CD8-positive, alpha-beta T cell (primary cell): ENCODE measurements at regions of chrX and their contacts with region 1.

Region 1: DNA sequence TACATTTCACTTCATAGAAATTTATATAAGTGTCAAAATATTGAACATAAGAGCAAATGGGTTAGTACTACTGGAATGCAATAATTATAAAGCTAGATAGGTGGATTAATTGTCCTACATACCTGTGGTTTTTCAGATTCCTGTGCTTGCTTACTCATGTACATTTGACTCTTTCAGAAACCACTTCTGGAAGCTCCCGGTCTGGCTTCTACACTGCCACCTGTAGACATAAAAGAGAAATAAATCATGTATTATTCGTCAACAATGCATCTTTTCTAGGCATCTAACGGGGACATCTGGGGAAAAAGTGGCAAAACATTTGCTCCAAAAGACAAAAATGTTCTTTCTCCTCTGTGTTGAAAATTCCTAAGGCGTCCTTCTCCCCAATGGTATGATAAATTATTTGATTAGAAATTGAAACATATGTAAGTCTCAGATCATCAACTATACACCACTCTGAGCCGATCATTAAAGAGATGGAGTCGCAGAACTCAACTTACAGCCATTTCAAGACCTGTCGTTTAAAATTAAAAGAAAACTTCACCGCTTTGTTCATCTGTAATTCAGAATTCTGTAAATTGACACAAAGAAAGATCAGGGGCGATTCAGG is 648.7 kb upstream of the DIPK2B start:
- DNase-seq: peak in 3 of 9 experiments; percentile 9 to 61 (median 42)
- ATAC-seq: peak; percentile 39
- H3K4me3 ChIP-seq: peak overlapping the region; percentile 61 to 66
- H3K4me3 Mint-ChIP-seq: peak overlapping the region; percentile 93
- H3K27ac ChIP-seq: no peak overlapping the region
- H3K27ac Mint-ChIP-seq: peak overlapping the region; percentile 72
- H3K4me1 ChIP-seq: no peaks in the 10 kb centered on the region
- H3K4me1 Mint-ChIP-seq: peaks cover 14% of the 10 kb centered on the region
- H3K27me3 ChIP-seq: peaks cover 0 to 7% of the 10 kb centered on the region in 2 experiments
- H3K27me3 Mint-ChIP-seq: no peaks in the 10 kb centered on the region
- CTCF ChIP-seq: peak; percentile 36

Region 2: GRCh38 chrX:45200741-45201234 is 648.6 kb before region 1 on chrX and contains the start of gene DIPK2B:
- CTCF ChIA-PET with region 1: no interaction called
- POLR2A ChIA-PET with region 1: no interaction called
- intact Hi-C with region 1: no loop called
- DNase-seq: no peak
- ATAC-seq: no peak
- H3K4me3 ChIP-seq: no peak within 1 kb of the TSS
- H3K4me3 Mint-ChIP-seq: no peak within 1 kb of the TSS
- H3K27ac ChIP-seq: no peak within 1 kb of the TSS
- H3K27ac Mint-ChIP-seq: no peak within 1 kb of the TSS
- H3K4me1 ChIP-seq: no peaks in the 10 kb centered on the region
- H3K4me1 Mint-ChIP-seq: no peaks in the 10 kb centered on the region
- H3K27me3 ChIP-seq: no peaks in the 10 kb centered on the region
- H3K27me3 Mint-ChIP-seq: peaks cover 15% of the 10 kb centered on the region
- CTCF ChIP-seq: no peak
- total RNA-seq, gene DIPK2B: not detected

Region 3: DNA sequence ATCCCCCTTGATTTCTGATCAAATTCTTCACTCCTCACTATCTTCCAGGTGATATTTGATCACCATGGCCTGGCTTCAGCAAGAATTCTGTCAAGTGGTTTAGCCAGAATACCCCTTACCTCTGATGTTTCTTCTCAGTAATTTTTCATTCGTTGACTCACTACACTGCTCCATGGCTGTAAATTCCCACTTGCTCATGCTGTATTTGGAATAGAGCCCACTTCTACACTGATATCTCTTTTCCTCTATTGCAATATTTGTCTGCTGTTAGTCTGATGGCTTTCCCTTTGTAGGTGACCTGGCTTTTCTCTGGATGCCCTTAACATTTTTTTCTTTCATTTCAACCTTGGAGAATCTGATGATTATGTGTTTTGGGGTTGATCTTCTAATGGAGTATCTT is 574.8 kb before region 1 on chrX:
- CTCF ChIA-PET with region 1: no interaction called
- POLR2A ChIA-PET with region 1: no interaction called
- intact Hi-C with region 1: no loop called
- DNase-seq: no peak
- ATAC-seq: no peak
- H3K4me3 ChIP-seq: no peak overlapping the region
- H3K4me3 Mint-ChIP-seq: no peak overlapping the region
- H3K27ac ChIP-seq: no peak overlapping the region
- H3K27ac Mint-ChIP-seq: no peak overlapping the region
- H3K4me1 ChIP-seq: no peaks in the 10 kb centered on the region
- H3K4me1 Mint-ChIP-seq: no peaks in the 10 kb centered on the region
- H3K27me3 ChIP-seq: no peaks in the 10 kb centered on the region
- H3K27me3 Mint-ChIP-seq: no peaks in the 10 kb centered on the region
- CTCF ChIP-seq: no peak

Region 4: DNA sequence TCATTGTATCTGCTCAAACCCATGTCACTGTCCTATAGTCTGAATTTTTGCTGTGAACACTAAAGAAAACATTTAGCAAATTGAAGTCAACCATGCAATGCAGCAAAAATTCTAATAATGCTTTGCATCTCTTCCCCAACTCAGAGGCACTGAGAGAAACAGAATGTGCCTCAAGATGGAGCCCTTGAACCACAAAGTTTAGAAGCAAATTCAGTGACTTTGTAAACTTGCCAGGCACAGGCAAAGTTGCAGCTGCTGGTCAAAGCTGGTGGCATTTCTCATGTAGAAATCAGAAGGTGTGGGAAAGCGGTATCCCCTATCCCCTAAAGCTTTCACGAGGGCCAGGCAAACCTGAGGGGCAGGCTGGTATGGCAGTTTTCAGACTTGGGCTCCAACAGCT is 527.0 kb before region 1 on chrX:
- CTCF ChIA-PET with region 1: no interaction called
- POLR2A ChIA-PET with region 1: no interaction called
- intact Hi-C with region 1: loop called in 1 of 2 experiments (anchors 10 kb)
- DNase-seq: peak in 2 of 9 experiments; percentile 13 to 31
- ATAC-seq: no peak
- H3K4me3 ChIP-seq: no peak overlapping the region
- H3K4me3 Mint-ChIP-seq: no peak overlapping the region
- H3K27ac ChIP-seq: no peak overlapping the region
- H3K27ac Mint-ChIP-seq: no peak overlapping the region
- H3K4me1 ChIP-seq: no peaks in the 10 kb centered on the region
- H3K4me1 Mint-ChIP-seq: no peaks in the 10 kb centered on the region
- H3K27me3 ChIP-seq: no peaks in the 10 kb centered on the region
- H3K27me3 Mint-ChIP-seq: peaks cover 2% of the 10 kb centered on the region
- CTCF ChIP-seq: no peak

Region 5: GRCh38 chrX:45515262-45516215 is 333.8 kb before region 1 on chrX:
- CTCF ChIA-PET with region 1: interaction called, 6 read pairs
- POLR2A ChIA-PET with region 1: no interaction called
- intact Hi-C with region 1: loop called (anchors 1 to 2 kb)
- DNase-seq: peak in 4 of 9 experiments; percentile 10 to 58 (median 31)
- ATAC-seq: no peak
- H3K4me3 ChIP-seq: no peak overlapping the region
- H3K4me3 Mint-ChIP-seq: no peak overlapping the region
- H3K27ac ChIP-seq: no peak overlapping the region
- H3K27ac Mint-ChIP-seq: no peak overlapping the region
- H3K4me1 ChIP-seq: no peaks in the 10 kb centered on the region
- H3K4me1 Mint-ChIP-seq: no peaks in the 10 kb centered on the region
- H3K27me3 ChIP-seq: peaks cover 0 to 3% of the 10 kb centered on the region in 2 experiments
- H3K27me3 Mint-ChIP-seq: no peaks in the 10 kb centered on the region
- CTCF ChIP-seq: no peak

Region 6: DNA sequence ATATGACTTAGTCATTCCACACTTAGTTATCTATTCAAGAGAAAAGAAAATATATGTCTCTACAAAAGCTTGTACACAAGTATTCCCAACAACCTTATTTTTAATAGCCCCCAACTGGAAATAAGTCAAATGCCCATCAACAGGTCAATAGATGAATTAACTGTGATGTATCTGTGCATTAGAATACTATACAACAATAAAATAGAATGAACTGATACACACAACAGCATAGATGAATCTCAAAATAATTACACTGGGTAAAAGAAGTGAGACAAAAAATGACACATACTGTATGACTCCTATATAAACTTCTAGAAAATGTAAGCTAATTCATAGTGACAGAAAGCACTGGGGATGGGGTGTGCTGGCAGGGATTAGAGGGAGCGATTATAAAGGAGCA is 294.6 kb before region 1 on chrX:
- CTCF ChIA-PET with region 1: no interaction called
- POLR2A ChIA-PET with region 1: no interaction called
- intact Hi-C with region 1: no loop called
- DNase-seq: no peak
- ATAC-seq: no peak
- H3K4me3 ChIP-seq: no peak overlapping the region
- H3K4me3 Mint-ChIP-seq: no peak overlapping the region
- H3K27ac ChIP-seq: no peak overlapping the region
- H3K27ac Mint-ChIP-seq: no peak overlapping the region
- H3K4me1 ChIP-seq: no peaks in the 10 kb centered on the region
- H3K4me1 Mint-ChIP-seq: no peaks in the 10 kb centered on the region
- H3K27me3 ChIP-seq: no peaks in the 10 kb centered on the region
- H3K27me3 Mint-ChIP-seq: no peaks in the 10 kb centered on the region
- CTCF ChIP-seq: no peak

Region 7: DNA sequence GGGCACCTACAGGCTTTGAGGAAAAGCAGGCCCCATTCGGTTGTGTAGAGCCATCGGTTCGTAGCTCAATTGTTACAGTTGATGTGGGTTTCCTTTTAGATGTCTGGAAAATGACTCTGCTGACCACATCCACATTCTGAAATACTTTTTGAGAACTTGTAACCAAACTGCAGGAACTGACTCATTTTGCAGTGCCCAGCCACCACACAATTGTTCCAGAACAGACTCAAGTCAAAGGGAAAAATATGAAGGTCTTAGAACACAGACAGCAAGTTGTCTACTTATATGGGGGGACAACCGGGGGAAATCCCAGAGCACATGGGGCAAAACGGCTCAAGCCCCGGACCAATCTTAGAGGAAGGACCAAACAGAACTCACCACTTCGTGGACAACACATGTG is 91.0 kb before region 1 on chrX:
- CTCF ChIA-PET with region 1: interaction called, 3 read pairs
- POLR2A ChIA-PET with region 1: no interaction called
- intact Hi-C with region 1: loop called in 1 of 2 experiments (anchors 5 kb)
- DNase-seq: peak in 6 of 9 experiments; percentile 17 to 73 (median 33)
- ATAC-seq: peak; percentile 45
- H3K4me3 ChIP-seq: peak overlapping the region in 1 of 2 experiments; percentile 26
- H3K4me3 Mint-ChIP-seq: peak overlapping the region; percentile 76
- H3K27ac ChIP-seq: peak overlapping the region; percentile 4 to 74
- H3K27ac Mint-ChIP-seq: peak overlapping the region; percentile 95
- H3K4me1 ChIP-seq: peaks cover 35% of the 10 kb centered on the region
- H3K4me1 Mint-ChIP-seq: peaks cover 59% of the 10 kb centered on the region
- H3K27me3 ChIP-seq: no peaks in the 10 kb centered on the region
- H3K27me3 Mint-ChIP-seq: no peaks in the 10 kb centered on the region
- CTCF ChIP-seq: no peak

Region 8: GRCh38 chrX:45806410-45807121 is 42.8 kb before region 1 on chrX:
- CTCF ChIA-PET with region 1: interaction called, 13 read pairs
- POLR2A ChIA-PET with region 1: interaction called, 3 read pairs
- intact Hi-C with region 1: loop called (anchors 1 to 2 kb)
- DNase-seq: peak; percentile 1 to 88 (median 37)
- ATAC-seq: peak; percentile 78
- H3K4me3 ChIP-seq: peak overlapping the region; percentile 27 to 46
- H3K4me3 Mint-ChIP-seq: peak overlapping the region; percentile 81
- H3K27ac ChIP-seq: peak overlapping the region; percentile 87 to 90
- H3K27ac Mint-ChIP-seq: peak overlapping the region; percentile 98
- H3K4me1 ChIP-seq: peaks cover 16% of the 10 kb centered on the region
- H3K4me1 Mint-ChIP-seq: peaks cover 43% of the 10 kb centered on the region
- H3K27me3 ChIP-seq: no peaks in the 10 kb centered on the region
- H3K27me3 Mint-ChIP-seq: no peaks in the 10 kb centered on the region
- CTCF ChIP-seq: no peak

Region 9: DNA sequence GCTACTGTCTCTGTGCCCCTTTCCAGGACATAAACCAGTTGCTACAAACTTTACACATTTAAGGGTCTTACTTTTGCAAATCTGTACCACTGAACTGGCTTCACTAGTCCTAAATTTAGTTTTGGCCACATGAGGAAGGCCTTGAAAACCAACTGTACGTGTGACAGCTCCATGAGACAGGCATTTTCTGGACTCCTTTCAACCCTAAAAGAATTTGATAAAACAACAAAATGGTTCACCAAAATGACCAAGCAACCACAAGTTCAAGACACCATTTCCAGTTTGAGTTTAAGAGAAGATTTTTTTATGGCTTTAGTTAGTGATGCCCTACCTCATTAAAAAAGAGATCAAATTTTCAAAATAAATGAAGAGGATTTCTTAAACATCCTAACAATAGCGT is 449.5 kb after region 1 on chrX:
- CTCF ChIA-PET with region 1: no interaction called
- POLR2A ChIA-PET with region 1: no interaction called
- intact Hi-C with region 1: no loop called
- DNase-seq: no peak
- ATAC-seq: no peak
- H3K4me3 ChIP-seq: no peak overlapping the region
- H3K4me3 Mint-ChIP-seq: no peak overlapping the region
- H3K27ac ChIP-seq: no peak overlapping the region
- H3K27ac Mint-ChIP-seq: no peak overlapping the region
- H3K4me1 ChIP-seq: no peaks in the 10 kb centered on the region
- H3K4me1 Mint-ChIP-seq: no peaks in the 10 kb centered on the region
- H3K27me3 ChIP-seq: no peaks in the 10 kb centered on the region
- H3K27me3 Mint-ChIP-seq: no peaks in the 10 kb centered on the region
- CTCF ChIP-seq: no peak